Motor neuron (in vitro differentiated cells): ENCODE measurements at regions of chr2 and their contacts with region 1.

Region 1: DNA sequence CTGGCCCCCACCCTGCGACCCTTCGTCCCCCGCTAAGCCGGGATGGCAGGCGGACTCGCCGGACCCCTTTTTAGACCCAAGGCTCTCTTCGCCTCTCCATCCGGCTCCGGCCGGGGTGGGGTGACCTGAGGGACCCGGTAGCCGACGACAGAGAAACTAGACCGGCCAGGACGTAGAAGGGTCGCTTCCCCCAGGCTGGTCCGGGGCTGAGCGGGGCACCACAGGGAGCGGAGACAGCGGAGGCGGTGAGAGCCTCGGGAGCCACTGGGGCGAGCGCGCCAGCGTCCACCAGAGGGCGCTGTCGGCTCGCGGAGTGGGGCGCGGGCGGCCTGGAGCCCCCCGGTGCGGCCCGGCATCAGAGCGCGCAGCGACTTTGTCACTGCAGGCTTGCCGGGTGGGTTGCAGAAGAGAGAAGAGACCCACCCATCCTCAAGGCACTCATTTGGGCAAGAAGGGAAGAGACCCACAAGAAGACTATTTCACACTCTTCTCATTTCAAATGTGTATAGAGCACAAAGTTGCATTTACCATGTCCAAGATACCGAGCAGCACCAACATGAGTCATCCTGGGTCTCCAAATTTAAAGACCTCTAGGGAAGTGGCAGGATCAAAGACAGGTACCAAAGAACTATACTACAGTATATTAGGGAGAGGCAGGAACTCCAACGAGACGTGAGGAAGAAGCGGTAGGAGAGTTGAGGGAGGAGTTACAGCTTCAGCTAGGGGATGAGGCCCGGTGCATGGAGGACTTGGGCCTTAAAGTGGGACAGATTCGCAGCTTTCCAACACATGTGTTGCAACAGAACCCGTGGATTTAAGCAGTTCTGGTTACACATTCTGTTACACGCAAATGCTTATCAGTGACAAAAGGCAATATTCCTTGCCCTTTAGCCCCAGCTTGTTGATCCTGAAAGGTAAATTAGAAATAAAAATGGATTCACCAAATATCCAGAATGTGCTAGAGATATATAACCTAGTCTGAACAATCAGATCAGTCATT is 7.6 kb upstream of the PRKCE start:
- ATAC-seq: peak; percentile 97 to 99 (median 98)
- H3K4me3 ChIP-seq: peak overlapping the region; percentile 31 to 44 (median 36)
- H3K27ac ChIP-seq: no peak overlapping the region
- H3K4me1 ChIP-seq: peaks cover 2 to 5% of the 10 kb centered on the region in 2 donors

Region 2: DNA sequence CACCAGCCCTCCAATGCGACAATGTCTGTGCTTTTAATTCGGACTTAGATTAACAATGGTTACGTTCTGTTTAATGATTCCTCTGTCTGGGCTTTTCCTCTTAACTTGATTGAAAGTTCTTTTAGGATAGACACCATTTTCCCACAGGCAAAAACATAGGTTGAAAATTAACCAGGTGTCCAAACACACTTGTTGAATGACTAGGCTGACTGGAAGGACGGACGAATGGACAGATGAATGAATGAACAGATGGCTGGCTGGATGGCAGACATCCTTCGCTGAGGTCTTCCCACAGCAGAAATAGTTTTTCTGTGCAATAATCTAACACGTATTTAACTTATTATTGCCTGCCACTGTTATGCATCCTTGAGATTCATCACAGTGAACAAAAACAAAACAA is 331.6 kb before region 1 on chr2:
- in situ Hi-C with region 1: no loop called
- ATAC-seq: no peak
- H3K4me3 ChIP-seq: no peak overlapping the region
- H3K27ac ChIP-seq: no peak overlapping the region
- H3K4me1 ChIP-seq: no peaks in the 10 kb centered on the region

Region 3: DNA sequence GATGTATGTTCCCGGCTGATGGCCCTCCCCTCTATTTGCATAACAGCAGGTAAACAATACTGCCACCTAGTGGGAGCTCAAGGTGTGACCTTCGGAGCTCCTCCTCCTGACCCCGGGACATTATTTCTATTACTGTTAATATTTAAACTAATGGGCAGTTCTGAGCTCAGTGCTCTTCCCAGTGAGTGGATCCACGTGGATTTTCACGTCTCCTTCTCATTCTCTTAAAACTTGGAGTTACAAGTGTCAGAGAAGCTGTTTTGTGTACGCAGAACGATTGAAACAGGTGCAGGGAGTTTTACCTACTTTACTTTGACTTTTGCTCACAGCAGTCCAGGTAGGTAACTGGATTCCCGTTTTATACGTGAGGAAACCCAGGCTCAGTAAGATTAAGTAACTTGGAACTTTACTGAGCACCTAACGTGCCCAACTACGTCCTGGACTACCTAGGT is 134.9 kb after region 1 on chr2:
- in situ Hi-C with region 1: loop called in 1 of 9 experiments (anchors 25 kb)
- ATAC-seq: peak in 7 of 8 experiments; percentile 40 to 81 (median 48)
- H3K4me3 ChIP-seq: no peak overlapping the region
- H3K27ac ChIP-seq: no peak overlapping the region
- H3K4me1 ChIP-seq: peaks cover 0 to 9% of the 10 kb centered on the region in 2 donors

Region 4: DNA sequence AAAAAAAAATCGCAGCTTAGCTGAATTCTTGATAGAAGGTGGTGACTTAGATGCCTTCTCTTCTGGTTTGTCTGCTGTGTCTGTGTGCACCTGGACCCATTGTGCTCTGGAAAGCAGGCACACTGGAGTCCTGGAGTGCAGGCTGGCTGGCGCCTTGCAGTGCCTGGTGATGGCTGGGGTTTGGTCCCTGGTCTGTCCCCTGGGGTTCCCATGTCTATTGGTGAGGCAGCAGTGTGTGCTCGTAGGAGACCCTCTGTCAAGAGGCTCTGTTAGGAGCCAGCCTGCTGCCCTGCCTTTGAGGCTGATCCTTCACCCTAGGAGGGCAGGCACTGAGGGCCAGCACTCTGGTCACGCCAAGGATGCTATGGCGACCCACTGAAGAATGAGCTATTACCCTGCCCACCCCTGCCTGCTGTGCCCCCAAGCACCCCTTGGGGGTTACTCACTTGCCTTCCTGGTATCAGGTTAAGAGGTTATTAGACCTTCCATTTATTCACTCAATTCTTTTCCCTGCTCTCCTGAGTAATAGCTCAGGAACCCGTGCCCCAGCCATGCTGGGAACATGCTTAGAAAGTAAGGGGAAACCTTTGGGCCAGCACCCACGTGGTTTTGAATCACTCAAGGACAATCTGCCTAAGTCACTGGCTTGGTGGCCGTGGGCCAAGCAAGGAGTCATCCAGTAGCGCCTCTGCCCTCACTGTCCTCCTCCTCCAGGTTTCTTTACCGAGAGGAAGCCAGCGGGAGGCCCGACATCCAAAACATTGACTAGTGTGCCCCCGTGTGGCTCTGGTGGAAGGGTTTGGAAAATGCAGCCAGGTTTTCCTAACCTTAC is 292.2 kb after region 1 on chr2:
- in situ Hi-C with region 1: loop called in 8 of 9 experiments (anchors 5 to 25 kb)
- ATAC-seq: peak; percentile 71 to 91 (median 86)
- H3K4me3 ChIP-seq: no peak overlapping the region
- H3K27ac ChIP-seq: no peak overlapping the region
- H3K4me1 ChIP-seq: peaks cover 6 to 7% of the 10 kb centered on the region in 2 donors

Region 5: DNA sequence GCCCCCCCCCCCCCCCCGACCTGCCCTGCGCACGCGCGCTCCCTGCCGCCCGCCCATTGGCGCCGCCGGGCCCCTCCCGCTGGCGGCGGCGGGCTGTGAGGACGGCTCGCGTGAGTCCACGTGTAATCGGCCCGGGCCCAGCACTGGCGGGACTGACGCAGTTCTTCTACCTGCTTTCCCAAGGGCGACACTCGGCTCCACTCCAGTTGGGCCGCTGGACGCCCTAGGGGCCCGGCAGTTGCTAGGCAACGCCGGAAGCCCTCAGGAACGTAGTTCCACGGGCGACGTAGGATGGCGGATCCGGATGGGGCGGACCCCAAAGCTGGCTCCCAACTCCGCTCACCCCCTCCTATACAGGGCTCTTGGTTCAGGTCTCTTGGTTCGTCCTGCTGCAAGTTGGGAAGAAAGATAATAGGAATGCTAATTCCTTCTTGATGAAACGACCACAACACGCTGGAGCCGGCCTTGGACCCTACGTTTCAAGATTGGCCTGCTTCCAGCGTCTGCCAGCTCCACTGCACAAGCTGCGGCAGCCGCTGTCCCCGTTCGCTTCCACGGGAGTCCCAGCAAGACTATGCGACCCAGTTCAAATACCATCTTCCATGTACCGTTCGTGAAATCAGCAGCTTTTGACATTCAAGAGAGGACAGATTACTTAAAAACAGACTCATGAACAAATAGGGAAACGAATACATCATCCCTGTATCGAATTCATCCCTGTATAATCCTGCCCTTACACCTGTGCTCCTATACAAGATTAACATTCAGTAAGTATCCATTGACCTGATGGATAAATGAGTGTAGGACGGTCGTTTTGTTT is 1272.2 kb after region 1 on chr2:
- in situ Hi-C with region 1: loop called in 1 of 9 experiments (anchors 25 kb)
- ATAC-seq: peak; percentile 80 to 96 (median 94)
- H3K4me3 ChIP-seq: peak overlapping the region; percentile 89 to 99 (median 98)
- H3K27ac ChIP-seq: peak overlapping the region; percentile 90 to 92
- H3K4me1 ChIP-seq: peaks cover 17 to 23% of the 10 kb centered on the region in 2 donors